ENCODE measurements at regions of chr22 and their contacts with region 1.

Region 1: DNA sequence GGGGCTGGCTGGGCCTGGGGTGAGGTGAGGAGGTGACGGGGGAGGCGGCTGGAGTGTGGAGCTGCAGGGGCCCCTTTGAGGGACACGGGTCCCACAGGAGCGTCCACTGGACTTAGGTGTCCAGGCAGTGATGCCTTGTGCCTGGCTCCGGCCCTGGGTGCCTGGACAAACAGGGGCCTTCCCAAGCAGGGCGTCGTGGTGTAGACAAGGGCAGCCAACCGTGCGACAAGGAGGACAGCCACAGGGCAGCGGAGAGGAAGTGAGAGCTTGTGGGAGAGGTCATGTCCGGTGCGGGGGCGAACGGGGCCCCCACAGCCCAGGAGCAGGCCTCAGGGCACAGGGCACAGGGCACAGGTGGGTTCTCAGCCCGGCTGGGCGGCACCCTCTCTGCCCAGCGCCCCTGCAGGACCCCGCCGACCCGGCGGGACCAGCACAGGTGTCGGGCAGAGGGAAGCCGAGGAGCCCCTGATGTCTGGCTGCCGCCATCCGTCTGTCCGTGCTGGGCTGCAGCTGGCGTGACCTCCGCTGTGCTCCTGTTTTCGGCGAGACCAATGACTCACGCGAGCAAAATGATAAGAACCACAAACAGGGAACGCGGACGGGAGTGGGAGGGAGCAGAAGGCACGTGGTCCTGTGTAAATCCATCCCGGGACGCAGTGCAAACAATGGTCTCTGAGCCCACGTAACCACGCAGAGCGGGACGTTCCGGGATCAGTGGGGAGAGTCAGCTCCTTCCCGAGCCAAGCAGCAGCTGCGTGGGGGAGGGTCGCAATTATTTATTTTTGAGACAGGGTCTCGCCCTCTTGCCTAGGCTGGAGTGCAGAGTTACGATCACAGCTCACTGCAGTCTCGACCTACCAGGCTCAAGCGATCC is 49.1 kb upstream of the A4GALT start:
- DNase-seq: peak; percentile 62
- ATAC-seq: peak; percentile 91
- H3K4me3 Mint-ChIP-seq: peak overlapping the region; percentile 77
- H3K27ac Mint-ChIP-seq: peak overlapping the region; percentile 70
- H3K4me1 Mint-ChIP-seq: peaks cover 63% of the 10 kb centered on the region
- H3K27me3 Mint-ChIP-seq: no peaks in the 10 kb centered on the region
- CTCF ChIP-seq: no peak

Region 2: GRCh38 chr22:42720263-42721044 is 49.4 kb before region 1 on chr22 and contains the start of gene A4GALT:
- CTCF ChIA-PET with region 1: no interaction called
- POLR2A ChIA-PET with region 1: interaction called, 3 read pairs
- intact Hi-C with region 1: loop called (anchors 10 kb)
- DNase-seq: peak; percentile 35
- ATAC-seq: peak; percentile 41
- H3K4me3 Mint-ChIP-seq: peak within 1 kb of the TSS; percentile 80
- H3K27ac Mint-ChIP-seq: no peak within 1 kb of the TSS
- H3K4me1 Mint-ChIP-seq: peaks cover 48% of the 10 kb centered on the region
- H3K27me3 Mint-ChIP-seq: peaks cover 30% of the 10 kb centered on the region
- CTCF ChIP-seq: no peak
- total RNA-seq, gene A4GALT: 16.9 and 18.4 TPM in 2 replicates

Region 3: GRCh38 chr22:42754658-42755057 is 15.2 kb before region 1 on chr22:
- CTCF ChIA-PET with region 1: no interaction called
- POLR2A ChIA-PET with region 1: interaction called, 5 read pairs
- intact Hi-C with region 1: loop called (anchors 2 kb)
- DNase-seq: no peak
- ATAC-seq: no peak
- H3K4me3 Mint-ChIP-seq: no peak overlapping the region
- H3K27ac Mint-ChIP-seq: peak overlapping the region; percentile 30
- H3K4me1 Mint-ChIP-seq: peaks cover 29% of the 10 kb centered on the region
- H3K27me3 Mint-ChIP-seq: peaks cover 1% of the 10 kb centered on the region
- CTCF ChIP-seq: no peak